Activated CD4-positive, alpha-beta T cell treated with anti-CD3 and anti-CD28 coated beads, Interleukin-2, amount 10 ng/mL, durations not matched to agents 24 days and 14 days (primary cell): ENCODE measurements at regions of chrX and their contacts with region 1.

Region 1: DNA sequence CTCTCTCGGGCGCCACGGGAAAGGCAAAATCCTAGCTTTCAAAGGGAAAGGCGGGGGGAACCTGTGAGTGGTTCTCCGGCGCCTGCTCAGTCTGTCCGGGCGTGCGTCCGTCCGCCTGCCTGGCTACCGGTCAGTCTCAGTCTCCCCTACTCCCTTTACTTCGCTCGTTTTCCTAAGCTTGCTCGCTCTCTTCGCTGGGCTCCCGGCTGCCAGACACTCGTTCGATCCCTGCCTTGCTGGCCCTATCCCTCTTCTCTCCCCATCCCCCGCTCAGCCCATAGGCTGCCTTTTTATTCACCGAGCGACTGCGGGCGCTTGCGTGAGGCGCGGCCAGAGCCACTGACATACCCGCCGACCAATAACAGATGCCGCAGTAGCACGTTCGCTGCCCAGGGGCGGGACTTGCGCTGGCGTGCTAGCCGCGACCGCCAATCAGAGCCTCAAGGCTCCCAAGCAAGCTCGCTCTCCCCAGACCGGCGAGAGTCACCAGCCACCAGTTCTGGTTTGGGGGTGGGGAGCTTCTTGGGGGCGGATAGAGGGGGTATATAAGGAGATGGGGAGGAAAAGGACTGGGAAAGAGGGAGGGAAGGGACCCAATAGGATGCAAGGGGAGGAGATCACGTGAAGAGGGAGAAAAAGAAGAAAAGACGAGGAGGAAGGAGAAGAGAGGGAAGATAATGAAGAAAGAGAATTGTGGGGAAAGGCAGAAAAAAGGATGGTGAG is 30.0 kb downstream of the ARHGEF9 start:
- DNase-seq: peak; percentile 95
- H3K4me3 Mint-ChIP-seq: peak overlapping the region; percentile 99
- H3K27ac Mint-ChIP-seq: peak overlapping the region; percentile 99
- H3K4me1 Mint-ChIP-seq: peaks cover 38% of the 10 kb centered on the region
- H3K27me3 Mint-ChIP-seq: no peaks in the 10 kb centered on the region

Region 2: GRCh38 chrX:63050225-63050624 is 704.8 kb before region 1 on chrX:
- intact Hi-C with region 1: no loop called
- DNase-seq: no peak
- H3K4me3 Mint-ChIP-seq: no peak overlapping the region
- H3K27ac Mint-ChIP-seq: no peak overlapping the region
- H3K4me1 Mint-ChIP-seq: no peaks in the 10 kb centered on the region
- H3K27me3 Mint-ChIP-seq: no peaks in the 10 kb centered on the region

Region 3: DNA sequence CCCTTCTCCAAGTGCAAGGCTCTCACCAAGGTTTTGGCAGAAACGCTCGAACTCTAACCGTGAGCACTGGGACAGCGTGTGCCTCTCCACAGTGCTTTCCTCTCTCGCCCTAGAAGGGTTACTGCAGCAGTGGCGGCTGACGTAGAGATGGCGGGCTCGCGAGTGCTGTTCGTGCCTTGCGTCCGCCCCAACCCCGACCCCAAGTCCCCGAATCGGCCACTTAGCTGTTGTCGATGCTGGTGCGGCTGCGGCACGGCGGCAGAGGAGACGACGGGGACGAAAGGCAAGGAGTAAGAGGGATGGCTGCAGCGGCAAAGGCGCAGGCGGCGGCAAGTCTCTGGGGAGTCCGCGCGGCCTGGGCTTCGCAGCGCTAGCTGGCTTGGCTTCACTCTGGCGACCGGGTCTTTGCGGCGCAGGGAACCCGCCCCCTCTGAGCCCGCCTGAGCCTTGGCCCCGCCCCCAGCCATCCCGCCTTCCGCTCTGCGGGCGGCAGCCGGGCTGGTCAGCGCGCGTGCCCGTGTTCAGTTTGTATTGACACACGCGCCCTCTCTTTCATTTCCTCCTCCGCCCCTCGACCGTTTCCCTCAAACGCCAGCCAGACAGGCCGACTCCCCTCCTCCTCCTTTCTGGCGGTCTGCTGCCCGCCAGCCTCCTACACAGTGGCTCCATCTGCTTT is 403.9 kb before region 1 on chrX and contains the start of gene SPIN4:
- intact Hi-C with region 1: loop called (anchors 1 kb)
- DNase-seq: peak; percentile 88
- H3K4me3 Mint-ChIP-seq: peak within 1 kb of the TSS; percentile 97
- H3K27ac Mint-ChIP-seq: peak within 1 kb of the TSS; percentile 61
- H3K4me1 Mint-ChIP-seq: peaks cover 15% of the 10 kb centered on the region
- H3K27me3 Mint-ChIP-seq: no peaks in the 10 kb centered on the region
- total RNA-seq, gene SPIN4: 4.9 and 5.3 TPM in 2 replicates

Region 4: DNA sequence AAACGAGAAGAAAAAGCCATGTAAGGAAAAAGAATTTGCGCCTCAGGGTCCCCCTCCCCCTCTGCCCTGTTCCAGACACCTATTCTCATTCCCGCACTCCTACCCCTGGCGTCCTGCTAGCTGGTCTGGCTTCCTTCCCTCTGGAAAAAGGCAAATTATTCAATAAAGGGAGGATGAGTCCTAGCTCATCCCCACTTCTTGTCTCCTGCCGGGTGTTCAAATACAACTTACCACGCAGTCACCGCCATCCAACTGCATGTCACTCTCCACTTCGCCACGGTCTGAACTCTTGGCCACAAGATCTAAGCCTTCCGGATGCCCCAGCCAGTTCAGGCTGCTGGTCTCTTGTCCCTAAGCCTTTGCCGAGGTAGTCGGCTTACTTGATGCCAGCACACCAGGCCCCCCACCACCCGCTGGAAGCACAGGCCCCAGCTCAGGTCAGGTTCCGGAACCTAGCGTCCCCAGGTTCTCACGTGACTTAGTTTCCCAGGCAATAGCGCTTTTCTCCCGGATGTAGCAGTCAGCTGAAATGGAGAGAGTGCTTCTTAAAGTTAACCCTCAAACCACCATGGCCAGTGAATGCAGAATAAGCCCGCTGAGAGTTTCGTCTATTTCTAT is 194.3 kb before region 1 on chrX:
- intact Hi-C with region 1: loop called (anchors 10 kb)
- DNase-seq: peak; percentile 86
- H3K4me3 Mint-ChIP-seq: peak overlapping the region; percentile 92
- H3K27ac Mint-ChIP-seq: peak overlapping the region; percentile 83
- H3K4me1 Mint-ChIP-seq: peaks cover 5% of the 10 kb centered on the region
- H3K27me3 Mint-ChIP-seq: no peaks in the 10 kb centered on the region

Region 5: DNA sequence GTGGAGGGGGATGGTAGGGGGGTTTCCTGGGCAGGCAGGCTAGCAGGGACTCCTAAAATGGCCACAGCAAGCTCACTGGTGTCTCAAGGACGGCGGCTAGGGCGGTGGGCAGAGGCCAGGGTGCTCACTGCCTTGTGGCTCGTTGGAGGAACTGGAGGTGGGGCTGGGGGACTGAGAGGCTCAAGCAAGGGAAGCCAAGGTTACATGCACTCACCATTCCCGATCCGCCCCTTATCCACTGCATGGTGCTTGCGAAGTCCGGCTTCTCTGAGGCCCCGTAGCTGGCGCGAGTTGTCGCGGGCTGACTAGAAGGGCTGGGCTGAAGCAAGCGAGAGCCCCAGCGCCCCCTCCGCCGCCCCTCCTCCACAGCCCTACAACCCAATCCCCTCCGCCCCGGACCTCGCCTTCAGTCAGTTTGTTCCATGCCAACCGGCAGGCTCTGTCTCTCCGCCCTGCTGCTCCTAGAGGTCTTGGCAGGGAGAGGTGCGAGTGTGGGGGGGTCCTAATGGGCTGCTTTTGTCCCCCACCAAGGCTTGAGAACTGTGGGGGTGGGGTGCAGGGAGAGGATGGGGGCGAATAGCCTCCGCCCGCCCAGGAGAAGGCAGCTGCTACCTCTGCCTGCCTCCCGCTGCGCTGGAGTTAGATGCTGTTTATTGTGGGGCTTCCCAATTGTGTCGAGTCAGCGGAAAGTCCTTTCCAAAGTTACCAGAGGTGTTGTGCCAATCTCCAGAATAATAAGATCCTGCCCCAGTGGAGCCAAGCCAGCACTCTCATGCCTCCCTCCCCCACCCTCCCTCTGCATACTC is 30.1 kb after region 1 on chrX and contains the start of gene ARHGEF9:
- intact Hi-C with region 1: no loop called
- DNase-seq: peak; percentile 48
- H3K4me3 Mint-ChIP-seq: peak within 1 kb of the TSS; percentile 66
- H3K27ac Mint-ChIP-seq: no peak within 1 kb of the TSS
- H3K4me1 Mint-ChIP-seq: no peaks in the 10 kb centered on the region
- H3K27me3 Mint-ChIP-seq: no peaks in the 10 kb centered on the region
- total RNA-seq, gene ARHGEF9: 16.7 and 18.9 TPM in 2 replicates

Region 6: GRCh38 chrX:64205735-64206491 is 450.9 kb after region 1 on chrX:
- intact Hi-C with region 1: loop called (anchors 5 kb)
- DNase-seq: peak; percentile 96
- H3K4me3 Mint-ChIP-seq: peak overlapping the region; percentile 89
- H3K27ac Mint-ChIP-seq: peak overlapping the region; percentile 94
- H3K4me1 Mint-ChIP-seq: peaks cover 10% of the 10 kb centered on the region
- H3K27me3 Mint-ChIP-seq: no peaks in the 10 kb centered on the region

Region 7: GRCh38 chrX:65534450-65535292 is 1779.7 kb after region 1 on chrX and contains the start of gene LAS1L:
- intact Hi-C with region 1: loop called (anchors 5 kb)
- DNase-seq: peak; percentile 96
- H3K4me3 Mint-ChIP-seq: peak within 1 kb of the TSS; percentile 99
- H3K27ac Mint-ChIP-seq: peak within 1 kb of the TSS; percentile 100
- H3K4me1 Mint-ChIP-seq: peaks cover 11% of the 10 kb centered on the region
- H3K27me3 Mint-ChIP-seq: no peaks in the 10 kb centered on the region
- total RNA-seq, gene LAS1L: 61.0 and 64.0 TPM in 2 replicates